Sciatic nerve (tissue), 2 donors: ENCODE measurements at regions of chr3 and their contacts with region 1.

Region 1: DNA sequence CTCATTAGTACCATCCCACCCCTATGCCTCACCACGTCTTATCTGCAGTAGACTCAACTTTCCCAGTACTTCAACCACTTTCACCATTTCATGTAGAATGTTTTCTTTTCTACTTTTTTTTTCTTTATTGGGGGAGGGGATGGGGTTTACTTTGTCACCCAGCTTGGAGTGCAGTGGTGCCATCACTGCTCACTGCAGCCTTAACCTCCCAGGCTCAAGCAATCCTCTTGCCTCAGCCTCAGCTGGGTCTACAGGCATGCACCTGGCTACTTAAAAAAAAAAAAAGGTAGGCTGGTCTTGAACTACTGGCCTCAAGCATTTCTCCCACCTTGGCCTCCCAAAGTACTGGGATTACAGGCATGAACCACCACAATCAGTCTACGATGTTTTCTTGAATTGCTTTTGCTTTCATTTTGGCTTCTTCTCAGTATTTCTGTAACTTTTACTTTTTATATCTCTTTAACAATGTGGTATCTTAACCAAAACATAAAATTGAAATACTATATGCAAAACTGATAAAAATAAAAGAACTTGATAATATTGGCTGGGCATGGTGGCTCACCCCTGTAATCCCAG is 44.9 kb upstream of the CHL1 start:
- DNase-seq: no peak
- ATAC-seq: no peak

Region 2: GRCh38 chr3:166071-166470 is 14.4 kb after region 1 on chr3:
- intact Hi-C with region 1: loop called (anchors 1 kb)
- DNase-seq: no peak
- ATAC-seq: no peak

Region 3: GRCh38 chr3:256501-256900 is 104.8 kb after region 1 on chr3:
- intact Hi-C with region 1: no loop called
- DNase-seq: no peak
- ATAC-seq: peak; percentile 62